ENCODE measurements at regions of chr5 and their contacts with region 1.

Region 1: DNA sequence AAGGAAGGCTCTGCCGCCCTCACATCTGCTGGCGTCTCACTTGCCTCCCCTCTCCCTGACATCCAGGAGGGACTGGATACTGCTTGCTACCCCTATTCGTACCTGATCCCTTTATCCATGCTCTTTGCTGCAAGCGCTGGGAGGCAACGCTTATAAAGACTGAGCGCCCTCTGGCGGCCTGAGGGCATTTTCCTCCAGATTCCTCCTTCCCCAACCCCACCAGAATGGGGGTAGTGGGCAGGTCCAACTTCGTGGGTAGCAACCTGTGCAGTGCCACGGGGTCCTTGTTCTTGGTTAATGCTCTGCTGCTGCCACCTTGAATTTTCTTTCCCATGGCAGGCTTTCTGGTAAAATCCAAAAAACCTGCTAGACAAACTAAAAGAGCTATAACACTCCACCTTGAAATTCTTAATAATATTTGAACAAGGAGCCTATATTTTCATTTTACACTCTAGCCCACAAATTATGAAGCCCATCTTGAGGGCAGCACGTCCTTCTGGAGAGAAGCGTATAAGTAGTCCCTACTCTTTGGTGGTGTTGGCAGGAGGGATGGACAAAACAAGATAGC is 52.4 kb downstream of the JADE2 start:
- DNase-seq: peak; percentile 77 to 81 (median 80)
- ATAC-seq: peak; percentile 59 to 79 (median 72)
- H3K4me3 ChIP-seq: no peak overlapping the region
- H3K27ac ChIP-seq: no peak overlapping the region
- H3K4me1 ChIP-seq: peaks cover 0 to 17% (median 6%) of the 10 kb centered on the region in 4 donors
- H3K27me3 ChIP-seq: no peaks in the 10 kb centered on the region
- CTCF ChIP-seq: peak; percentile 75 to 89 (median 84)
- POLR2A ChIP-seq: no peak

Region 2: DNA sequence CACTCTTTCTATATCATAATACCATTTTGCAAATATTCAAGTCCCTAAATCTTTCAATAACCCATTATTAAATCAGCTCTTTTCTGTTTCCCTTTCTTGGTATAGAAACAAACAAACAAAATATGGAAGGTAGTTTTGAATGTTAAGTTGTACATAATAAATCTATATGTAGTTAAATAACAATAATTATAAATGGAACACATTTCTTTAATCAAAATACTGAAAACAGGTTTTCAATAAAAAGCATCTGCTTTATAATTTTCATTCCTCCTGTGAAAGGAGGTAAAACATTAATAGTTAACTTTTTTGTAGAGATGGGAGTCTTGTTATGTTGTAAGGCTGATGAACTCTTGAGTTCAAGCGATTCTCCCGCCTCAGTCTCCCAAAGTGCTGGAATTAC is 265.1 kb before region 1 on chr5:
- intact Hi-C with region 1: loop called (anchors 5 to 10 kb)
- DNase-seq: no peak
- ATAC-seq: no peak
- H3K4me3 ChIP-seq: no peak overlapping the region
- H3K27ac ChIP-seq: no peak overlapping the region
- H3K4me1 ChIP-seq: peaks cover 0 to 4% (median 0%) of the 10 kb centered on the region in 4 donors
- H3K27me3 ChIP-seq: no peaks in the 10 kb centered on the region
- CTCF ChIP-seq: no peak
- POLR2A ChIP-seq: no peak

Region 3: GRCh38 chr5:134527146-134527960 is 50.5 kb before region 1 on chr5:
- intact Hi-C with region 1: loop called in 1 of 2 experiments (anchors 5 kb)
- DNase-seq: peak; percentile 85 to 89 (median 88)
- ATAC-seq: peak; percentile 68 to 75 (median 72)
- H3K4me3 ChIP-seq: peak overlapping the region; percentile 73 to 88 (median 87)
- H3K27ac ChIP-seq: peak overlapping the region; percentile 96 to 98 (median 97)
- H3K4me1 ChIP-seq: peaks cover 0 to 33% (median 13%) of the 10 kb centered on the region in 4 donors
- H3K27me3 ChIP-seq: no peaks in the 10 kb centered on the region
- CTCF ChIP-seq: peak; percentile 57 to 95 (median 68)
- POLR2A ChIP-seq: peak; percentile 26

Region 4: DNA sequence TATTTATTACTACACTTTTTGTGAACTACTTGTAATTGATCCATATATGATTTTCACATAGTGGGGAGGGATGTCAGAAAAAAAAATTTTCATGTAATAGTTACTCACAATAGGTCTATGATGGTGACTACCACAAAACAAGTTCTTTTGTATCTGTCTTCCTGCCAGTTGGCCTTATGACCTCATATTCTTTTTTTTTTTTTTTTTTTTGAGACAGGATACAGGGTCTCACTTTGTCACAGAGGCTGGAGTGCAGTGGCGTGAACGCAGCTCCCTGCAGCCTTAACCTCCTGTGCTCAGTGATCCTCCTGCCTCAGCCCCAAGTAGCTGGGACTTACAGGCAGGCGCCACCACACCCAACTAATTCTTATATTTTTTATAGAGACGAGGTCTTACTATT is 81.6 kb after region 1 on chr5:
- intact Hi-C with region 1: no loop called
- DNase-seq: no peak
- ATAC-seq: peak in 3 of 4 donors; percentile 24 to 57 (median 56)
- H3K4me3 ChIP-seq: no peak overlapping the region
- H3K27ac ChIP-seq: no peak overlapping the region
- H3K4me1 ChIP-seq: peaks cover 0 to 16% (median 3%) of the 10 kb centered on the region in 4 donors
- H3K27me3 ChIP-seq: no peaks in the 10 kb centered on the region
- CTCF ChIP-seq: no peak
- POLR2A ChIP-seq: no peak

Region 5: DNA sequence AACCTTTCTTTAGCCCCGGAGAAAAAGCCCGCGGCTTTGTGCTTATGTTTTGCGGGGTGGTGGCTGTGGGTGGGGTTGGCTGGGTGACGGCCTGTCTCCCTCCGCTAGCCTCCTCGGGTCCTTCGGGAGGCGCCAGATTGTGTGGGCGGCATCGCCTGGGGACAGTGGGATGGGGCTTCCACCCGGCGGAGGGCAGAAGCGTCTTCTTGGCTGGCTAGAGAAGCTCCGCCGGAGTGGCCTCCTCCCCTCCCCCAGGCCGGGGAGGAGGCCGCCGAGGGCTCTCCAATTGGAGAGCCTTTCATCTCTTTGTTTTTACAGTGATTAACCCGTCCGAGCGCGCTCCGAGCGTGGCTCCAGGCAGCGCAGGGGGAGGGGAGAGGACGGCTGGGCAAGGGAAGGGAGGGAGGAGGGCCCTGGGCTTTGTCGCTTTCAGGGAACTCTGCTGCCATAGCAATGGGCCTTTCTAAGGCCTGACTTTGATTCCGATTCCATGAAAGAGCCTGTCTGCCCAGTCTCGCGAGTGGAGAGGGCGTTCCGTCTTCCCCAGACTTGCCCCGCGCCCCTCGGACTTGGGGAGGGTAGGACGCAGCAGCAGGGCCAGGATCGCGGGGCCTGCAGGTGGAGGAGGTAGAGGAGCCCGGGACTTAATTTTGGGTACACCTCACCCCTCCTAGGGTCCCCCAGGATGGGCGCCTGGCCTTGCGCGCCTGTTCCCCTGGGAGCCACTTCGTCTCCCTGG is 911.0 kb after region 1 on chr5:
- intact Hi-C with region 1: no loop called
- DNase-seq: no peak
- ATAC-seq: no peak
- H3K4me3 ChIP-seq: no peak overlapping the region
- H3K27ac ChIP-seq: no peak overlapping the region
- H3K4me1 ChIP-seq: peaks cover 0 to 21% (median 0%) of the 10 kb centered on the region in 4 donors
- H3K27me3 ChIP-seq: peaks cover 0 to 29% of the 10 kb centered on the region in 2 donors
- CTCF ChIP-seq: no peak
- POLR2A ChIP-seq: no peak